ENCODE measurements at regions of chr1 and their contacts with region 1.

Region 1: GRCh38 chr1:154463512-154463990 is 38.5 kb upstream of the TDRD10 start:
- DNase-seq: peak in 1 of 4 experiments; percentile 37
- ATAC-seq: peak; percentile 21; the same call in 2 of the 3 replicates
- H3K4me3 ChIP-seq: no peak overlapping the region
- H3K27ac ChIP-seq: peak overlapping the region; percentile 72; the same call in 2 of the 3 replicates
- H3K4me1 ChIP-seq: peaks cover 7 to 26% of the 10 kb centered on the region in 2 experiments
- H3K27me3 ChIP-seq: no peaks in the 10 kb centered on the region
- CTCF ChIP-seq: no peak
- EP300 ChIP-seq: no peak
- POLR2A ChIP-seq: no peak
- RAD21 ChIP-seq: no peak

Region 2: GRCh38 chr1:154198756-154199562 is 264.6 kb before region 1 on chr1:
- CTCF ChIA-PET with region 1: no interaction called
- POLR2A ChIA-PET with region 1: no interaction called
- in situ Hi-C with region 1: no loop called
- intact Hi-C with region 1: loop called (anchors 10 kb)
- DNase-seq: peak; percentile 73 to 77 (median 76)
- ATAC-seq: peak; percentile 87
- H3K4me3 ChIP-seq: no peak overlapping the region
- H3K27ac ChIP-seq: no peak overlapping the region
- H3K4me1 ChIP-seq: peaks cover 5 to 8% of the 10 kb centered on the region in 2 experiments; a peak in 4 of 5 replicates
- H3K27me3 ChIP-seq: no peaks in the 10 kb centered on the region
- CTCF ChIP-seq: peak; percentile 57 to 73 (median 73)
- EP300 ChIP-seq: no peak
- POLR2A ChIP-seq: no peak
- RAD21 ChIP-seq: peak; percentile 64 to 66

Region 3: GRCh38 chr1:154272217-154272998 is 191.1 kb before region 1 on chr1 and contains the start of gene HAX1:
- CTCF ChIA-PET with region 1: no interaction called
- POLR2A ChIA-PET with region 1: no interaction called
- in situ Hi-C with region 1: no loop called
- intact Hi-C with region 1: loop called (anchors 10 kb)
- DNase-seq: peak; percentile 91 to 98 (median 92)
- ATAC-seq: peak; percentile 95
- H3K4me3 ChIP-seq: peak within 1 kb of the TSS; percentile 88
- H3K27ac ChIP-seq: peak within 1 kb of the TSS; percentile 79
- H3K4me1 ChIP-seq: peaks cover 3 to 5% of the 10 kb centered on the region in 2 experiments; a peak in 4 of 5 replicates
- H3K27me3 ChIP-seq: no peaks in the 10 kb centered on the region; a peak in 1 of 5 replicates
- CTCF ChIP-seq: peak; percentile 85 to 97 (median 93)
- EP300 ChIP-seq: peak; percentile 58
- POLR2A ChIP-seq: peak; percentile 89
- RAD21 ChIP-seq: peak; percentile 91 to 97
- polyA plus RNA-seq, gene HAX1: 447 to 492 TPM

Region 4: GRCh38 chr1:154344977-154345837 is 118.3 kb before region 1 on chr1:
- CTCF ChIA-PET with region 1: interaction called, 4 read pairs
- POLR2A ChIA-PET with region 1: no interaction called
- in situ Hi-C with region 1: no loop called
- intact Hi-C with region 1: loop called (anchors 2 kb)
- DNase-seq: peak; percentile 61 to 86 (median 66)
- ATAC-seq: peak; percentile 82
- H3K4me3 ChIP-seq: no peak overlapping the region
- H3K27ac ChIP-seq: no peak overlapping the region
- H3K4me1 ChIP-seq: peaks cover 0 to 15% of the 10 kb centered on the region in 2 experiments; a peak in 3 of 5 replicates
- H3K27me3 ChIP-seq: no peaks in the 10 kb centered on the region
- CTCF ChIP-seq: peak; percentile 78 to 91 (median 90)
- EP300 ChIP-seq: no peak
- POLR2A ChIP-seq: no peak
- RAD21 ChIP-seq: peak; percentile 65 to 79

Region 5: GRCh38 chr1:154404984-154405761 is 58.4 kb before region 1 on chr1 and contains the start of gene IL6R:
- CTCF ChIA-PET with region 1: interaction called, 6 read pairs
- POLR2A ChIA-PET with region 1: interaction called, 3 read pairs
- in situ Hi-C with region 1: no loop called
- intact Hi-C with region 1: loop called (anchors 5 kb)
- DNase-seq: peak; percentile 55 to 80 (median 71)
- ATAC-seq: peak; percentile 87
- H3K4me3 ChIP-seq: peak within 1 kb of the TSS; percentile 32
- H3K27ac ChIP-seq: no peak within 1 kb of the TSS; the same call in 2 of the 3 replicates
- H3K4me1 ChIP-seq: peaks cover 11 to 19% of the 10 kb centered on the region in 2 experiments; a peak in 4 of 5 replicates
- H3K27me3 ChIP-seq: peaks cover 37 to 53% of the 10 kb centered on the region in 2 experiments
- CTCF ChIP-seq: peak; percentile 42 to 79 (median 52); a peak in 5 of 6 replicates
- EP300 ChIP-seq: peak; percentile 14; the same call in 1 of the 2 replicates
- POLR2A ChIP-seq: no peak
- RAD21 ChIP-seq: peak; percentile 43 to 70
- polyA plus RNA-seq, gene IL6R: not detected

Region 6: DNA sequence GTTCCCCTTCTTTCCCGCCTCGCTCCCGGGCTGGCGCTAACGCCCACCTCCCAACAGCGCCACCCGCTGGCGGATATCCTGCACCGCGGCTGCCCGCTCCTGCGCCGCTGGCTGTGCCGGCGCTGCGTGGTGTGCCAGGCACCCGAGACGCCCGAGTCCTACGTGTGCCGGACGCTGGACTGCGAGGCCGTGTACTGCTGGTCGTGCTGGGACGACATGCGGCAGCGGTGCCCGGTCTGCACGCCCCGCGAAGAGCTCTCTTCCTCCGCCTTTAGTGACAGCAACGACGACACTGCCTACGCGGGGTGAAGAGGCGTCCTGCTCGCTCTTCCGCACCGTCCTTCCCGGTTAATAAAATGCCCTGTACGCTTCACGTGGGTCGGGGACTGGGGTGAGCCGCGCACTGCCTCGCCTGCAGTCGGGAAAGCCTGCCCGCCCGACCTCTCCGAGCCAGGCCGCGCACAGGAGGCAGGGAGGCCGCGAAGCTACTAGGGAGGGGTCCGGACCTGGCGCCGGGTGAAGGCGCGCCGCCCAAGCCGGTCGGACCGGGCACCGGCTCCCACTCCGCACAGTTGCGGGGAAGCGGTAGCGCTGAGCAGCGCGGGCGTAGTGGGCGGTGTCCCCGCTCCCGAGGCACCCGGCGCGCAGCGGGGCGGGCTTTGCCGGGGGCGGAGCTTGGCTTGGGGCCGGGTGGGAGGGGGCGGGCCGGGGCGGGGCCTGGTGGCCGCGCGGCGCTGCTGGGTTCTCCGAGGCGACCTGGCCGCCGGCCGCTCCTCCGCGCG is 587.2 kb after region 1 on chr1 and contains the start of gene ADAM15:
- CTCF ChIA-PET with region 1: no interaction called
- POLR2A ChIA-PET with region 1: no interaction called
- in situ Hi-C with region 1: no loop called
- intact Hi-C with region 1: no loop called
- DNase-seq: peak; percentile 91 to 98 (median 98)
- ATAC-seq: peak; percentile 90
- H3K4me3 ChIP-seq: peak within 1 kb of the TSS; percentile 80
- H3K27ac ChIP-seq: peak within 1 kb of the TSS; percentile 83
- H3K4me1 ChIP-seq: peaks cover 29 to 51% of the 10 kb centered on the region in 2 experiments
- H3K27me3 ChIP-seq: no peaks in the 10 kb centered on the region
- CTCF ChIP-seq: peak; percentile 93 to 95 (median 95)
- EP300 ChIP-seq: no peak
- POLR2A ChIP-seq: peak; percentile 68
- RAD21 ChIP-seq: peak in 1 of 2 experiments; percentile 60
- polyA plus RNA-seq, gene ADAM15: 0.69 to 2.6 TPM